ENCODE measurements at regions of chr3 and their contacts with region 1.

Region 1: DNA sequence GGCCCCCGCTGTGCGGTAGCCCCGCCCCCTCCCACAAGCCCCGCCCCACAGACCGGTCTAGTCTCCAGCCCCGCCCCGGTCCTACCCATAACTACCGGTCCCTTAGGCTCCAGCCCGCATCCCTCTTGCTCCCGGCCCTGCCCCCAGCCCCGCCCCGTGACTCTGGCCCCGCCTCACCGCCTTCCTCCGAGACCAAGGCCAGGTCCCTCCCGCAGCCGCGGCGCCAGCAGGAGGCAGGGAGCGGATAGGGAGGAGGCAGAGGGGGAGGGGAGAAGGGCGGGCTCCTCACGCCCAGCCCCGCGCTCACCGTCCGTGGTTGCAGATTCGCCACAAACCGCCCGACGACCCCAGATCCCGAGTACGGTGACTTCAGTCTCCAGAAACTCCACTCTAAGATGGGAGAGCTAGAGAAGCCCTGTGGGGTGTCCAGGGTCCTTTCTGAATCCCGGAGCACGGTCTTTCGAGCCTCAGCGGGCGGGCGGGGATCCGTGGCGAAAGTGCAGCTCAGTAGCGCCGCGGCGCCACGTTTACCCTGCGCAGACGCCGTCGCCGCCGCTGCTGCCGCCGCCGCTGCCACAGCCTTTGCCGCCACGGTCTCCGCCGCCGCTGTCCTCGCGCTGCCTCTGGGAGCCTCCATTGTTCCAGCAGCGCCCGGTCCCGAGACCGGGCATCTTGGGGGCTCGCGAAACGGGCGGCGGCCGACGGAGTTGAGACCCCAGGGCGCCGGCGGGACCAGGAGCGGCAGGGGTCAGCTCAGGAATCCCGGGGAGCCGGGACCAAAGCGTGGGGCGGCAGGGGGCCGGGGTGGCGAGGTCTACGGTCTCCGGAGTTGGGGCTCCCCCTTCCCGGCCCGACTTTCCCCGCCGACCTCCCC is at the start of gene BRPF1:
- H3K4me3 Mint-ChIP-seq: peak within 1 kb of the TSS; percentile 89
- H3K27ac Mint-ChIP-seq: peak within 1 kb of the TSS; percentile 90
- H3K4me1 Mint-ChIP-seq: peaks cover 79% of the 10 kb centered on the region
- H3K27me3 Mint-ChIP-seq: no peaks in the 10 kb centered on the region

Region 2: DNA sequence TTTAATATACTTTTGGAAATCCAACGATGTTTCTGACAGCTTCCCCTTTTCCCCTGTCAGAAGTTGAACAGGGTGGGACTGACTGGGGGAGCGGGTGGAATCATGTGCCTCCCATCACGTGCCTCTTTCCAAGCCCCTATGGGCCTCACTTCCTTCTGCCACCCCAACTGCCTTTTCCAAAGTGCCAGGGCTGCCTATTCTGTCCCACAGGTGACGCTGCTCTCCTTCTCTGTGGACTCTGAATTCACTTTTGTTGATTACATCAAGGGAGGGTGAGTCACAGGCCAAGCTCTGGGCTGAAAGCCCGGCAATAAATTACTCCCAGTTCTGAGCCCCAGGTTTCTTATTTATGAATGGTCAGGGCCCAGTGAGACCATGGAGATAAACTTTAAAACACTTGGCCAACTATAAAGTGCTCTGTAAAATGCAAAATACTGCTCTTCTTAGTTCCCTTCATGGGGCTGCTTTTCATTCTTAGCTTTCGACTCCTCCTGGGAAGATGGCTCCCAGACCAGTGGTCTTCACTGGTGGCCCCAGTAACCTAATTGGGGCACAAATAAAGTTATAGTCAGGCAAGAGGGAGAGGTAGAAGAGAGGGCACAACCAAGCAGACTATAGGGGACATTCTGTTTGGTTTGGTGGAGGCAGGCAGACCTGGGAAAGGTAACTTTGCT is 15.5 kb before region 1 on chr3:
- intact Hi-C with region 1: loop called (anchors 1 kb)
- H3K4me3 Mint-ChIP-seq: no peak overlapping the region
- H3K27ac Mint-ChIP-seq: peak overlapping the region; percentile 78
- H3K4me1 Mint-ChIP-seq: peaks cover 43% of the 10 kb centered on the region
- H3K27me3 Mint-ChIP-seq: peaks cover 1% of the 10 kb centered on the region

Region 3: GRCh38 chr3:9749645-9750555 is 18.5 kb after region 1 on chr3 and contains the start of gene OGG1:
- intact Hi-C with region 1: loop called (anchors 2 kb)
- H3K4me3 Mint-ChIP-seq: peak within 1 kb of the TSS; percentile 85
- H3K27ac Mint-ChIP-seq: peak within 1 kb of the TSS; percentile 92
- H3K4me1 Mint-ChIP-seq: peaks cover 42% of the 10 kb centered on the region
- H3K27me3 Mint-ChIP-seq: no peaks in the 10 kb centered on the region

Region 4: GRCh38 chr3:9792405-9793160 is 61.1 kb after region 1 on chr3 and contains the starts of genes ARPC4 and TADA3:
- intact Hi-C with region 1: loop called (anchors 1 kb)
- H3K4me3 Mint-ChIP-seq: peak within 1 kb of the TSS; percentile 95
- H3K27ac Mint-ChIP-seq: peak within 1 kb of the TSS; percentile 100
- H3K4me1 Mint-ChIP-seq: peaks cover 59% of the 10 kb centered on the region
- H3K27me3 Mint-ChIP-seq: no peaks in the 10 kb centered on the region

Measured in dendritic cell treated with granulocyte-macrophage colony-stimulating factor and Interleukin-4, amounts not matched to agents 40 ng/mL and 50 ng/mL, for 4 days (primary cell).